Endothelial cell of umbilical vein (primary cell): ENCODE measurements at regions of chr6 and their contacts with region 1.

Region 1: GRCh38 chr6:148578245-148578732 is 168.5 kb upstream of the UST start:
- DNase-seq: peak; percentile 68
- H3K4me3 ChIP-seq: no peak overlapping the region
- H3K27ac ChIP-seq: no peak overlapping the region
- H3K4me1 ChIP-seq: no peaks in the 10 kb centered on the region
- H3K27me3 ChIP-seq: no peaks in the 10 kb centered on the region
- CTCF ChIP-seq: peak; percentile 76 to 79
- POLR2A ChIP-seq: no peak

Region 2: GRCh38 chr6:148559848-148560433 is 18.3 kb before region 1 on chr6:
- CTCF ChIA-PET with region 1: interaction called, 28 read pairs
- POLR2A ChIA-PET with region 1: no interaction called
- dilution Hi-C with region 1: no loop called
- intact Hi-C with region 1: loop called (anchors 1 kb)
- DNase-seq: peak; percentile 64
- H3K4me3 ChIP-seq: peak overlapping the region in 2 of 3 experiments; percentile 36 to 41
- H3K27ac ChIP-seq: no peak overlapping the region
- H3K4me1 ChIP-seq: no peaks in the 10 kb centered on the region
- H3K27me3 ChIP-seq: no peaks in the 10 kb centered on the region
- CTCF ChIP-seq: peak; percentile 96 to 99
- POLR2A ChIP-seq: no peak

Region 3: GRCh38 chr6:148593130-148593812 is 15.0 kb after region 1 on chr6:
- CTCF ChIA-PET with region 1: interaction called, 17 read pairs
- POLR2A ChIA-PET with region 1: no interaction called
- dilution Hi-C with region 1: no loop called
- intact Hi-C with region 1: loop called (anchors 1 kb)
- DNase-seq: no peak
- H3K4me3 ChIP-seq: no peak overlapping the region
- H3K27ac ChIP-seq: no peak overlapping the region
- H3K4me1 ChIP-seq: no peaks in the 10 kb centered on the region
- H3K27me3 ChIP-seq: peaks cover 0 to under 1% of the 10 kb centered on the region in 2 experiments
- CTCF ChIP-seq: no peak
- POLR2A ChIP-seq: no peak

Region 4: DNA sequence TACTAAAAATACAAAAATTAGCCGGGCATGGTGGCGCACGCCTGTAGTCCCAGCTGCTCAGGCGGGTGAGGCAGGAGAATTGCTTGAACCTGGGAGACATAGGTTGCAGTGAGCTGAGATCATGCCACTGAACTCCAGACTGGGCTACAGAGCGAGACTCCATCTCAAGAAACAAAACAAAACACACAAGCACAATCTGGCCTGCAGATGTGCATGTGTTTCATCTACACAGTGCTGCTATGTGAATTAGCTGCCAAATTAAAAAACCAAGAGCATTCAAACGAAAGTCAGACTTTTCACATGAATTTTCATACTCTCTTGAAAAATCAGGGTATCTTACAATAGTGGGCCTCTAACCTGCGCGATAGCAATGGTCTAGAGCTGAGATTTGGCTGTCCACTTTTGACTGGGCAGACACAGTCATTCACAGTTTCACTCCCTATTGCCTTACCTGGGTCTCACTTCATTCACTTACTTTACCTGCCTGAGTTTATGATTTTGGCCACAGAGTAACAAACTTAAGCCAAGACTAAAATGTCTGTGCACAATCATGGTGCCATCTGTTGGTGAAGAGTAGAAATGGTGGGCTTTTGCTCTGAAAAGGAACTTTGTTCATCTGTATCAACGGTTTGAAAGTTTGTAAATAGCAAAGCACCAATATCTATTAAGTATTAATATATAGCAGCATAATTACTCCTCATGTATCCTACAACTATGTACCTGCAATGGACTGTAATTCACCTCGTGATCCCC is 30.1 kb after region 1 on chr6:
- CTCF ChIA-PET with region 1: interaction called, 15 read pairs
- POLR2A ChIA-PET with region 1: no interaction called
- dilution Hi-C with region 1: no loop called
- intact Hi-C with region 1: loop called (anchors 1 kb)
- DNase-seq: peak; percentile 51
- H3K4me3 ChIP-seq: no peak overlapping the region
- H3K27ac ChIP-seq: no peak overlapping the region
- H3K4me1 ChIP-seq: no peaks in the 10 kb centered on the region
- H3K27me3 ChIP-seq: no peaks in the 10 kb centered on the region
- CTCF ChIP-seq: peak; percentile 40 to 59
- POLR2A ChIP-seq: no peak

Region 5: GRCh38 chr6:148735989-148736388 is 157.7 kb after region 1 on chr6:
- CTCF ChIA-PET with region 1: no interaction called
- POLR2A ChIA-PET with region 1: no interaction called
- dilution Hi-C with region 1: no loop called
- intact Hi-C with region 1: no loop called
- DNase-seq: no peak
- H3K4me3 ChIP-seq: no peak overlapping the region
- H3K27ac ChIP-seq: no peak overlapping the region
- H3K4me1 ChIP-seq: no peaks in the 10 kb centered on the region
- H3K27me3 ChIP-seq: peaks cover 1 to 2% of the 10 kb centered on the region in 2 experiments
- CTCF ChIP-seq: no peak
- POLR2A ChIP-seq: no peak

Region 6: DNA sequence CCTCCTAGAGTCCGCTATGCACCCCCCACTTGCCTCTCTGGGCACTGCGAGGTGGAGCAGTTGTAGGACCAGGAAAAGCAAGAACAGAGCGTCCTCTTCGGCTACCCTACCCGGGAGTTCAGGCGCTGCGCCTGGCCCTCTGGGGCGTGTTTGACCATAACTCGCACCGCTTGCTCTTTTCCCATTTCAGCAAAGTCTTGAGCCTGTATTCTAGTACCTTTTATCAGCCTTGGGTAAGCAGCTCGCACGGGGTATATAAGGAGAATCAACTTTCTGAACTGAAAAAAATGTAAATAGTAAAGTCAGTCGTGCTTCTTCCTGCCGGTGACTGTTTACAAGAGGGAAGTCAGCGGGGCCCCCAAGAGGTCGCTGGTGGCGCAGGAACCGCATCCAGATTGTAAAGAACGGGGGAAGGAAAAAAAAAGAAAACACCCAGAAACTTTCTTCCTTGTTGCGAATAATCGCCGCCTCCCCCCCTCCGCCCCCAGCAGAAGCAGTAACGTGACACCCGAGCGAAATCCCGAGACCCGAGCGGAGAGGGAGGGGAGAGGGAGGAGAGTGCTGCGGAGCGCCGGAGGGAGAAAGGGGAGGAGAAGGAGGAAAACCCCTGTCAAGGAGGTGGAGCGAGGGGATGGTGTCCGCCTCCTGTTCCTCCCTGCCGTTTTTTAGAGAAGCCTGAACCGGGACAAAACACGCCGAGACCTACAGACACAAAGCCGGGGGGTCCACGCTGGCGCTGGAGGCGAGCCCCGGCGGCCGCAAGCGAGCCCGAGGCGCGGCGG is 168.3 kb after region 1 on chr6 and contains the start of gene UST:
- CTCF ChIA-PET with region 1: interaction called, 3 read pairs
- POLR2A ChIA-PET with region 1: no interaction called
- dilution Hi-C with region 1: no loop called
- intact Hi-C with region 1: loop called (anchors 5 kb)
- DNase-seq: peak; percentile 60
- H3K4me3 ChIP-seq: peak within 1 kb of the TSS; percentile 20 to 65 (median 54)
- H3K27ac ChIP-seq: no peak within 1 kb of the TSS
- H3K4me1 ChIP-seq: peaks cover 7% of the 10 kb centered on the region
- H3K27me3 ChIP-seq: peaks cover 36 to 44% of the 10 kb centered on the region in 2 experiments
- CTCF ChIP-seq: peak in 1 of 2 donors; percentile 24
- POLR2A ChIP-seq: no peak
- total RNA-seq, gene UST: 0.81 and 0.84 TPM in 2 replicates

Region 7: DNA sequence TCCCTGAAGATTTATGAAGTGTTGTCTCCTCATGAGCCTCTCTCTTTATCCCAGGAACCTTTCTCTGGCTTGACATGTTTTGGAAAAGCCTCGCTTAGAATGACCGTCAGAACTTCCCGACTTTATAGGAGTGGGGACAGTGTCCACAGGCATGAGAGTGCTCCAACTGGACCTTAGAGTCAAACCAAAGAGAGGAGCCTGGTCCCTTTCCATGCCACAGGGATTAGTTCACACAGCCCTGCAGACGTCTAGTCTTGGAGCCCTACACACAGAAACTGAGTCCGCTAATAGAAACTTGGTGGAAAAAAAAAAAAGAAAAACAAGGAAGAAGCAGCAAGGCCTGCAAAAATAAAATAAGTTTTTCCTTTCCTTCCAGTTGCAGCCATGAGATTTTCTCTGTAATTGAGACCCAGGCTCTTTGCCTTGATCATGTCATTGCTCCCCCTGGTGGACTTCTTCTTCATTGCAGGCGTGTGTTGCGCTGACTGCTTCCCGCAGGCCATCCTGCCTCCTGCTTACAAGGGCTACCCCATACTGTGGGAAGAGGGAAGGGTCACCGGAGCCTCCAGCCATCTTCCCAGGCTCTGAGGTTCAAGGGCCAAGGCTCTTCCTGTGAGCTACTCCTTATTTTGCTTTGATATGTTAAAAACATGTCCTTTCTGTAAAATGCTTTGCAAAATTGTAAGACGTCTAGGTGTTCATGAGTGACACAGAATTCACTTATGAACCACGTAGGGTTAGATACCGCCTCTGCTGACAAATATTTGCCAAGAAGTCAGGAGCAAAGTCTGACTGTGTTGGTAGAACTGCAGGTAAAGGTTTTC is 369.5 kb after region 1 on chr6:
- CTCF ChIA-PET with region 1: interaction called, 73 read pairs
- POLR2A ChIA-PET with region 1: no interaction called
- dilution Hi-C with region 1: no loop called
- intact Hi-C with region 1: loop called (anchors 1 kb)
- DNase-seq: peak; percentile 77
- H3K4me3 ChIP-seq: no peak overlapping the region
- H3K27ac ChIP-seq: no peak overlapping the region
- H3K4me1 ChIP-seq: no peaks in the 10 kb centered on the region
- H3K27me3 ChIP-seq: no peaks in the 10 kb centered on the region
- CTCF ChIP-seq: peak; percentile 85 to 90
- POLR2A ChIP-seq: no peak